Motor neuron (in vitro differentiated cells): ENCODE measurements at regions of chr10 and their contacts with region 1.

Region 1: DNA sequence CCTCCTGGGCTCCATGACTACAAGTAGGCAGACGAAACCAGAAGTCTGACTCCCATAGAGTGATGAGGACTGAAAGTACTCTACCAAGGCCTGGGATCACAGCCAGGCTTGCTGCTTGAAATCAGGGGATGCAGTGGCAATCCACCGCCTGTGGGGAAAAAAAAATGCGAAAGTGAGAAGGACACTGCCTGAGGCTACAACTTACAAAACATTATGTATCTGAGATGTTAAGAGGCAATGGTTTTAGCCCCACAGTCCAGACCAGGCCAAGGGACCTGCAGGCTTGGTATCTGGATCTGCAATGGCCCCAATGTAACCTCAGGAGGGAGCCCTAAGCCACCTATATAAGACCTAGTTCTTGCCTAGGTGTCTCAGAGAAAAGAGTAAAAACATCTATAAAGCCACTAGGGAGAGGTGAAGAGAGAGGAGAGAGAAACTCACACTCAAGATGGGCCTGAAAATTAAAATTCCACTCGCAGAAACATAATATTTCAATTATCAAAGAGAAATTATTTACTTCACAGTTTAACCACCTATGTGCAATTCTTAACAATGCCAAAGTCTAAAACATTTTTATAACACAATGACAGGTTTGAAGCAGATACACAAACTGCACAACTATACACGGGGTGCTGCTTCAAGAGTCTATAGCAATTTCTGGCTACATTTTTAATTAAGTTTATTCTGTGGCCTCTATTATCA is 13.9 kb downstream of the DNAJC1 start:
- ATAC-seq: peak; percentile 79 to 99 (median 92)
- H3K4me3 ChIP-seq: no peak overlapping the region
- H3K27ac ChIP-seq: no peak overlapping the region
- H3K4me1 ChIP-seq: no peaks in the 10 kb centered on the region

Region 2: GRCh38 chr10:21495752-21496342 is 493.8 kb before region 1 on chr10:
- in situ Hi-C with region 1: no loop called
- ATAC-seq: peak; percentile 68 to 84 (median 75)
- H3K4me3 ChIP-seq: peak overlapping the region; percentile 66 to 80 (median 79)
- H3K27ac ChIP-seq: peak overlapping the region; percentile 92 to 94
- H3K4me1 ChIP-seq: peaks cover 12 to 17% of the 10 kb centered on the region in 2 donors

Region 3: DNA sequence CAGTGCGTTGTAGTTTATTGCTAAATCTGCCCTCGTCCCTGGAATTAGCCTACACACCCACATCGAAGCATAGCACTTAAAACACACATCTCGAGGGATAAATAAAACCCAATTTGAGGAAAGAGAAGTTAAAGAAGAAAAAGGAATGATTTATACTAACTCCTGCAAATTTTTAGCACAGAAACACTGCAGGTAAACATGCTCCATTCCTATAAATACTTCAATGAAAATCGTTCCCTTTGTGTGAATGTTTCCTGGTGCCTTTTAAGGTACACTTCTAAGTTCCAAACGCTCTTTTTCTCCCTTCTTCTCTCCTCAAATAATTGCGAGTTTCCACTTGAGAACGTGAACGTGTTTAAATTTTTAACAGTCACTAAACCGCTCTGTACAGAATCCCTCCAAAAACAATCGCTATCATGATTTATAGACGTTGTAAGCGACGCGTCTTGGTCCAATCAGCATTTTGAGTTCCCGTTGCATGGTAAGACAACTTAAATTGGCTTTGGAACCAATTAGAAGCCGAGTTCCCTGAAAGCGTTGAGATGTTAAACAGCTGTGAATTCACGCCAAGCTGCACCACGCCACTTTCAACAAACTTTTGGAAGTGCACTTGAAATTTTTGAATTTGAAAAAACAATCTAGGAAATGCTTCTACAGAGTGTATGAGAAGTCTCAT is 240.7 kb after region 1 on chr10:
- in situ Hi-C with region 1: loop called in 1 of 9 experiments (anchors 10 kb)
- ATAC-seq: peak in 3 of 8 experiments; percentile 2 to 9 (median 6)
- H3K4me3 ChIP-seq: peak overlapping the region; percentile 45 to 83 (median 68)
- H3K27ac ChIP-seq: no peak overlapping the region
- H3K4me1 ChIP-seq: peaks cover 4 to 5% of the 10 kb centered on the region in 2 donors

Region 4: DNA sequence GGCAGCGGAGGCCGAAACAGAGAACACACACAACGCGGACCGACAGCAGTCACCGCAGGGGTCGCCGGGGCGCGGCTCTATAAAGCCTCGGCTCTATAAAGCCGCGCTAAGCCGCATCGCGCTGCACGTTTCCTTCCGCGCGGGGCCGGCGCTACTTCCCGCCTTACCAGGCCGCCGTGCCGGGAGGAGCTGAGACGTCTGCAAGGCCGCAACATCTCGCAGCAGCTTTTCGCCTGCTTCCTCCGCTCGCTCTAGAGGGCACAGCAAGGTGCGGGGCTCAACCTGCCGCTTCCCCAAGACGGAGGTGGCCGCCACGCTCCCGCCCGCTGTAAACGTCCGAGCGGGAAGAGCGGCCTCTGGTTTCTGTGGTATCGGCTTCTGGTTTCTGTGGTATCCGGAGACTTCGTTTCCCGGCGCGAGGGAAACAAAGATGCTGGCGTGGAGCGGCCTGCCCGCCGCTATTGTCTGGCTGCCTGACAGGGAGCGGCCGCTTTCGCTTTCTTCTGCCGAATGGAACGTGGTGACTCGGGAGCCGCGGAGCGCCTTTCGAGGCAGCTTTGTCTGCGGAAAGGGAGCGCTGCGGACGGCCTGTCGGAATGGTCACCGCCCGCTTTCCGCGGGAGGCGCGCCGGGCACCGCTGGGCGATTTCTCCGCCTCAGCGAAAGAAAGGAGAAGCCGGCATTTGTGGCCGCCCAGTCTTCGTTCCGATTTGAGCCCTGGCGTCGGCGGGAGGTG is 447.4 kb after region 1 on chr10:
- in situ Hi-C with region 1: loop called in 1 of 9 experiments (anchors 25 kb)
- ATAC-seq: peak; percentile 87 to 93 (median 90)
- H3K4me3 ChIP-seq: peak overlapping the region; percentile 44 to 56 (median 54)
- H3K27ac ChIP-seq: peak overlapping the region; percentile 89 to 94
- H3K4me1 ChIP-seq: peaks cover 6 to 16% of the 10 kb centered on the region in 2 donors